Motor neuron (in vitro differentiated cells): ENCODE measurements at regions of chr12 and their contacts with region 1.

Region 1: DNA sequence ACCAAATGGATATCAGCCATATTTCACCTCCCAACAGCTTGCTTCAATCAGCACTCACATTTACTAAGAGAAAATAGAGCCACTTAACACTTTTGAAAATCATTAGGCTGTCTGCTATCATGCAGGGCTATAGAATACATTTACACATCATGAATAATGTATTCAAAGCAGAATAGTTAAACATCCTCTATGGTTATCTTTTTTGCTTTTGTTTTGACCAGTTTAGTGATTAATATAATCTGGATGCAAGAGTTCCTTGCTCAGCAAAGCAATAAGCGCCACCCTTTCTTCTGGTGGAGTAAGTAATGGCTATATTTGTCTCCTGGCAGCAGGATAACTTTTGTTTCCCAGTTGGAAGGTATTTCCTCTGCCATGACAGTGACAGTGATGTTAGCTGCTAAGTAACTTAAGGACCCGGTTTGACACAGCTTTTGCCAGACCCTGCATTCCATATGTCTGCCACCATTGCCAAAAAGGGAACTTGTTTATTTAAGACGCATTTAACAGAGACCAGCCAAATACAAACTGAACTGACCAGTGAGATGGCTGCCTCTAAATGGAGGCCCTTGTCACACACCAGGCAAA is 70.3 kb upstream of the NR2C1 start:
- ATAC-seq: peak in 7 of 8 experiments; percentile 40 to 88 (median 70)
- H3K4me3 ChIP-seq: no peak overlapping the region
- H3K27ac ChIP-seq: no peak overlapping the region
- H3K4me1 ChIP-seq: peaks cover 12 to 31% of the 10 kb centered on the region in 2 donors

Region 2: DNA sequence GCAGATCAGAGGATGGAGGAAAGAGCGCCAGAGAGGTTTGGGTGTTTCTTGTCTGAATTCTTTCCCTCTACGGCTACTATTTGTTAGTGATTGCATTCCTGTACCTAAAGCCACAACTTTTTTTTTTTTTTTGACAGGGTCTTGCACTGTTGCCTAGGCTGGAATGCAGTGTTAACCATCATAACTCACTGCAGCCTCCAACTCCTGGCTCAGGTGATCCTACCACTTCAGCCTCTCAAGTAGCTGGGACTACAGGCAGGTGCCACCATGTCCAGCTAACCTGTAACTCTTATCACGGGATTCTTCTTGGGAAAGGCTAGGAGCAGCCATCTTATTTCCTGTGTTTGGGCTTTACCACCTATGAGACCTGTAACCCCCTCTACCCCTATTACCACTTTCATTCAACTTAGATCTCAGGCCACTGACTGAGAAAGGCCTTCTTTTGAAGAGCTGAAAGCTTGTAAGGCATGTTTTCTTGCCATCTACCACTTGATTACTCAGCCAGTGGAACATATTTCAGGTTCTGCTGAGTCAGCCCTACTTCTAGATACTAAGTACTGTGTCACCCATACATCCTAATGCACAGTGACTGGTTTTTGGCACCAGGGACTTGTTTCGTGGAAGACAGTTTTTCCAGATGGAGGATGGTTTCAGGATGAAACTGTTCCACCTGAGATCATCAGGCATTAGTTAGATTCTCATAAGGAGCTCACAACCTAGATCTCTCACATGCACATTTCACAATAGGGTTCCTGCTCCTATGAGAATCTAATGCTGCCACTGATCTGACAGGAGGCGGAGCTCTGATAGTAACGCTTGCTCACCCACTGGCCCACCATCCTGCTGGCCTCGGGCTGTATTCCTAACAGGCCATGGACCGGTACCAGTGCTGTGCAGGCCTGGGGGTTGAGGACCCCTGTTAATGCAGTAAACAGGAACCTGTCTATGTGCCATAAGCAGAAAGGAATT is 80.8 kb after region 1 on chr12:
- in situ Hi-C with region 1: no loop called
- ATAC-seq: peak in 1 of 8 experiments; percentile 15
- H3K4me3 ChIP-seq: no peak overlapping the region
- H3K27ac ChIP-seq: no peak overlapping the region
- H3K4me1 ChIP-seq: peaks cover 3 to 18% of the 10 kb centered on the region in 2 donors

Region 3: DNA sequence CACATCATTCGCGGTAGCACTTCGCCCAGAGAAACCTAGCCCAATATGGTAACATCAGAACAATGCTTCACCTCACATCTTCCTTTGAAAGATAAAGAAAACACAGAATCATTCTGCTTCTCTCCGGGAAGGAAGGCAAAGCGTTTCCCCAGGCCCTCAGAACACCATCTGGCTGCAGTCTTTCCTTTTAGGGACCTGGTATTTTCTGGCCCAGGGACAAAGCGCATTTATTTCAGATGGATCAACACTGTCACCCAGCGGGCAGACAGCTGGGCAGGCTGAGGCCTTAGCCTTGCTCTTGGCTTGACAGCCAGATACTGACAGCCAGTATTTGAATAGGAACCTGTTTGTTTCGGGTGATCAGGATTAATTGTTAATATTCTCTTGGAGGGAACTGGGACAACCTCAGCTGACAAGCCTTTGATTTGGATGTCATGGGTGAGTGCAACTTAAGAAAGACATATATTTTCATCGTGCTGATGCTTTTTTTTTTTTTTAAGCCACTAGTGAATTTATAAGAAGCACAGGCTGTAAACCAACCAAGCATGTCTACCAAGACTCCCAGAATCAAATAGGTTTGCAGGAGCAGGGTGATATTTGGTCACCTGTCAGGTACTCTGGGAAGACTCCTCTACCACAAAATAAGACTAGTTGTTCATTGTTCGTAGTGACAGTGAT is 192.8 kb after region 1 on chr12:
- in situ Hi-C with region 1: loop called in 1 of 9 experiments (anchors 25 kb)
- ATAC-seq: peak; percentile 87 to 99 (median 99)
- H3K4me3 ChIP-seq: peak overlapping the region in 3 of 5 donors; percentile 10 to 18 (median 11)
- H3K27ac ChIP-seq: peak overlapping the region; percentile 65 to 82
- H3K4me1 ChIP-seq: peaks cover 10 to 19% of the 10 kb centered on the region in 2 donors